Activated CD4-positive, alpha-beta memory T cell treated with anti-CD3 and anti-CD28 coated beads, Interleukin-2, amount 10 ng/mL, durations not matched to agents 7 days and 5 days (primary cell): ENCODE measurements at regions of chr5 and their contacts with region 1.

Region 1: DNA sequence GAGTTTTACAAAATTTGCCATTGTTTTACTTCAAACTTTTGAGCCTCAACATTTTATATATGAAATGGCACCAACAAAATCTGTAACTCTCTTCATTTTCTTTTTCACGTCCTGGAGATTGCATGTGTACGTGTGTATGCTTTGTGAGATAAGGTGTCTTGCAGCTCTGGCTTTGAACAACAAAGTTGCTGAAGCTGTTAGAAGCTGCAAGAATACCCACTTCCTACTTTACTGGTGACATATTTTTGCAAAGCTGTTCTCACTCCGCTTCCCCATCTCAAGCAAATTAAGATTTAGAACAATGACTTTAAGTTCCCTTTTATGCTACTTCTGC is 41.8 kb downstream of the FYB1 start:
- DNase-seq: no peak
- H3K4me3 Mint-ChIP-seq: peak overlapping the region; percentile 65
- H3K27ac Mint-ChIP-seq: peak overlapping the region; percentile 92
- H3K4me1 Mint-ChIP-seq: peaks cover 96% of the 10 kb centered on the region
- H3K27me3 Mint-ChIP-seq: no peaks in the 10 kb centered on the region

Region 2: GRCh38 chr5:39158127-39158593 is 19.4 kb before region 1 on chr5:
- CTCF ChIA-PET with region 1: interaction called, 12 read pairs
- POLR2A ChIA-PET with region 1: interaction called, 106 read pairs
- DNase-seq: no peak
- H3K4me3 Mint-ChIP-seq: peak overlapping the region; percentile 37
- H3K27ac Mint-ChIP-seq: peak overlapping the region; percentile 38
- H3K4me1 Mint-ChIP-seq: peaks cover 81% of the 10 kb centered on the region
- H3K27me3 Mint-ChIP-seq: no peaks in the 10 kb centered on the region

Region 3: DNA sequence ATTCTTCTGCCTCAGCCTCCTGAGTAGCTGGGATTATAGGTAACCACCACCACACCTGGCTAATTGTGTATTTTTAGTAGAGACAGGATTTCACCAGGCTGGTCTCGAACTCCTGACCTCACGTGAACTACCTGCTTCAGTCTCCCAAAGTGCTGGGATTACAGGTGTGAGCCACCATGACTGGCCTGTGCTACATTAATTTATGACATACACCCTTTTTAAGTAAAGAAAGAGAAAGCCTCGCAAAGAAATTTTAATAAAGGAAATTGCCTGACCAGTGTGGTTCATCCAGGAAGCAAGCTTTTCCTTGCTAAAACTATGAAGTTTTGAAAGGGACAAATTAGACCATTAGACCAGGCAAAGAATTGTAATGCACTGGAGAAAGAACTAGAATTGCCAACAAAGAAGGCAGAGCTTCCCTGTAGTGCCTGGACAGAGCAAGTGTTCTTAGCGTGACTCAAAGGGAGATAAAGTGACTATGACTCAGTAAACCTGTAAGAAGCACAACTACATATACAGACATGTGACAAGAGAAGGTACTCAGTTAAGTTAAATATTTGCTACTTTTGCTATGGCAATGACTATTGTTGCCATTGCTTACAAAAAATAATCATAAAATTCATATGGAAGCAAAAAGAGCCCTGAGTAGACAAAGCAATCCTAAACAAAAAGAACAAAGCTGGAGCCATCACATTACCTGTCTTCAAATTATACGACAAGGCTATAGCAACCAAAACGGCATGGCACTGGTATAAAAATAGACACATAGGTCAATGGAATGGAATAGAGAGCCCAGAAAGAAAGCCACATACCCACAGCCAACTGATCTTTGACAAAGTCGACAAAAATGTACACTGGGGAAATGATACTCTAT is 12.8 kb before region 1 on chr5:
- CTCF ChIA-PET with region 1: interaction called, 5 read pairs
- POLR2A ChIA-PET with region 1: interaction called, 106 read pairs
- DNase-seq: no peak
- H3K4me3 Mint-ChIP-seq: peak overlapping the region; percentile 60
- H3K27ac Mint-ChIP-seq: peak overlapping the region; percentile 79
- H3K4me1 Mint-ChIP-seq: peaks cover 85% of the 10 kb centered on the region
- H3K27me3 Mint-ChIP-seq: no peaks in the 10 kb centered on the region

Region 4: DNA sequence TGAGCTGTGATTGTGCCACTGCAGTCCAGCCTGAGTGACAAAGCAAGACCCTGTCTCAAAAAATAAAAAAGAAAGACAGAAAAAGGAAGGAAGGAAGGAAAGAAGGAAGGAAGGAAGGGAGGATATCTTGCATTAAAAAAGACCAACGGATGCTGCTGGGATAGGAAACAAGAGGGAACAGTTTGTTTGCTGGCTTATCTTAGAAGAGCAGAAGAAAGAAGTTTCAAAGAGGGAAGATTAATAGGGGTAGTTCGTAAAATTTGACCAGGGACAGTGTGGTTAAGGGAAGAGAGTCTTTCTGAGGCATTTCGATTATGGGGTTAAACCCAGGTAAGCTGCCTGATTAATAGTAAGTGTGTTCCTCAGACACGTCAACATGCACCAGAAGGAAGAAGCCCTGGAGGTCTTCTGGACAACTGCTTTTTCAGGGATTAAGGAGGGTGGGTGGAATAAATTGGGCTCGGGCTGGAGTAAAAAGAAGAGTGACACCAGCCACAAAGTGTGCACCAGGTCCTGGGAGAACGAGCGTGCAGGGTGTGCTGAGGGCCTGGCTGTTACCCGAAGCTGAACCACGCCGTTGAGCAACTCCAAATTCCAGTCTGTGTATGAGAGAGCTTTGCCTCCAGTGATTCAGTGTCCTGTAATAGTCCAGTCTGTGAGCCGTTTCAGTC is 17.0 kb after region 1 on chr5:
- CTCF ChIA-PET with region 1: interaction called, 71 read pairs
- POLR2A ChIA-PET with region 1: interaction called, 508 read pairs
- DNase-seq: no peak
- H3K4me3 Mint-ChIP-seq: peak overlapping the region; percentile 76
- H3K27ac Mint-ChIP-seq: peak overlapping the region; percentile 79
- H3K4me1 Mint-ChIP-seq: peaks cover 77% of the 10 kb centered on the region
- H3K27me3 Mint-ChIP-seq: no peaks in the 10 kb centered on the region

Region 5: GRCh38 chr5:39202597-39203274 is 25.1 kb after region 1 on chr5:
- CTCF ChIA-PET with region 1: interaction called, 12 read pairs
- POLR2A ChIA-PET with region 1: interaction called, 508 read pairs
- DNase-seq: peak; percentile 62
- H3K4me3 Mint-ChIP-seq: peak overlapping the region; percentile 96
- H3K27ac Mint-ChIP-seq: peak overlapping the region; percentile 97
- H3K4me1 Mint-ChIP-seq: peaks cover 40% of the 10 kb centered on the region
- H3K27me3 Mint-ChIP-seq: no peaks in the 10 kb centered on the region

Region 6: GRCh38 chr5:39231705-39232525 is 54.3 kb after region 1 on chr5:
- CTCF ChIA-PET with region 1: no interaction called
- POLR2A ChIA-PET with region 1: interaction called, 12 read pairs
- DNase-seq: peak; percentile 45
- H3K4me3 Mint-ChIP-seq: no peak overlapping the region
- H3K27ac Mint-ChIP-seq: peak overlapping the region; percentile 83
- H3K4me1 Mint-ChIP-seq: peaks cover 19% of the 10 kb centered on the region
- H3K27me3 Mint-ChIP-seq: no peaks in the 10 kb centered on the region

Region 7: GRCh38 chr5:39811381-39811780 is 633.8 kb after region 1 on chr5:
- CTCF ChIA-PET with region 1: no interaction called
- POLR2A ChIA-PET with region 1: no interaction called
- DNase-seq: no peak
- H3K4me3 Mint-ChIP-seq: no peak overlapping the region
- H3K27ac Mint-ChIP-seq: no peak overlapping the region
- H3K4me1 Mint-ChIP-seq: no peaks in the 10 kb centered on the region
- H3K27me3 Mint-ChIP-seq: peaks cover 6% of the 10 kb centered on the region